AG04449 (cell line): ENCODE measurements at regions of chr11 and their contacts with region 1.

Region 1: GRCh38 chr11:134207538-134208239 is 16.1 kb downstream of the NCAPD3 start:
- DNase-seq: no peak
- H3K4me3 ChIP-seq: no peak overlapping the region
- CTCF ChIP-seq: peak; percentile 29

Region 2: DNA sequence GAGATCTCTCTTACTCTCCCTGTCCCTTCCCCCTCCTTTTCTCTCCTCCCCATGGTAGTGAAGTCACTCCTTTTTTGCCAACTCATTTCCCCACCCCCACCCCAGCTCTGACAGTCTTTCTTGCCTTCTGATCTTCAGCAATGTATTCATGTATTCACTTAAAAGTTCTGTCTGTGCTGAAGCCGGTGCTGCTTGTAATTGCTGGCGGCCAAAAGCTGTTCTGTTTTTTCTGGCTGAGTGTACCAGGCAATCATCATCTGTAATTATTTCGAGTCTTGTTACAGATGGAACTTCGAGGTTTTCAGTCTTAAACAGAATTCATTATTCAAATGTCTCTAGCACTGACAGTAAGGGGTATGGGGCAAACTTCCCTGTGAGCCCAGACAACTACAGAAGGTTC is 461.9 kb before region 1 on chr11:
- CTCF ChIA-PET with region 1: no interaction called
- POLR2A ChIA-PET with region 1: no interaction called
- DNase-seq: no peak
- H3K4me3 ChIP-seq: no peak overlapping the region
- CTCF ChIP-seq: no peak

Region 3: DNA sequence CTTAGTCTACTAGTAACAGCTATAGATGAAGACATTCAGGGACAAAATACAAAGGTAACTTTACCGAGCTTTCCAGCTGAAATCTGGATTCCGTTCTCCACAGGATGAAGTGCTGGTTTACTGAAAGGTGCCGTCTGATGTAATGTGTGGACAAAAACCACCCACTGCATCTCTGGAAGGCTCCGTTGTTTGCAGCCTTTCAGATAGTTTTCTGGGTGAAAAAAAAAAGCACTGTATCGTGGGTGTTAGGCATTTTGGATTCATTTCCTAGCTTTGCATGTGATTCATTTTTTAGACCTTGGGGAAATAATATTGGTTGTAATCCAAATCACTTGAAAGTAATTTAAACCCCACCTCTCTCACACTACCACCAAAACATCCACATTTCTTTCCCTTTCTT is 128.4 kb before region 1 on chr11:
- CTCF ChIA-PET with region 1: no interaction called
- POLR2A ChIA-PET with region 1: no interaction called
- DNase-seq: no peak
- H3K4me3 ChIP-seq: no peak overlapping the region
- CTCF ChIP-seq: no peak

Region 4: DNA sequence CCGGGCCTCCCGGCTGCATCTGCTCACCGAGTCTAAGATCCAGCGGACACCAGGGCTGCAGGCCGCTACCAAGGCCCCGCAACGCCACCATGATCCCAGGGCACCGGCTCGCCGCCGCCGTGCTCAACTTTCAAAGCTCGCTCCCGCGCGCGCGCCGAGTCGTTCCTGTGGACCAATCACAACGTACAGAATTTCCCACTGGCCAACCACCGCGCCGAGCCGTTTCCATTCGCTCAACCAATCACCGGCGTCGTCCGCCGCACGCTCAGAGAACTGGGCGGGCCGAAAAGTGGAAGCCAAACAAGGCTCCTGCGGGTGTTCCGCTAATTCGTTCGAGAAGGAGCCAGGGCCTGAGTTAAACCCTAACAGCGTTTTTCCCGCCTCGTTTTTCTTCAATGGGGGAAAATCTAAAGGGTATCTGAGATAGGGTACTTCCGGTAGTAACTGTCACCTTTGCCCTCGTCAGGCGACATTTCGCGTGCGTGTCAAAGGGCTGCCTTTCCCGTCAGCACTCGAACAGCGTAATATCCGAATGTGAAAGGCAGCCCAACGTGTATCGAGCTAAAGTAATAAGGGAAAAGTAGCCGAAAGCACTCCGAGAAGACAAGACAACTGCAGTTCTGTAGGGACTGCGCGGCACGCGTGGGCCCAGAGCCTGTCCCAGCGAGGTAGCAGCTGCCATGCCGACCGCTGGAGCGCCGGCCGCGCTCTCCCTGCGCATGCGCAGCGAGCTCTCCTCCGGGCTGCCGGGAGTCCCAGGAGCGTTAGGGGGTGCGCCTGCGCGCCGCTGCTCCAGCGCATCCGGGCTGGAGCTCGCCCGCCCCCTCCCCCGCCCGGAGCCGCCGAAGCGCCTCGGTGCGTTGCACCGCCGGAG is 16.4 kb after region 1 on chr11 and contains the starts of genes NCAPD3 and VPS26B:
- CTCF ChIA-PET with region 1: interaction called, 17 read pairs
- POLR2A ChIA-PET with region 1: no interaction called
- DNase-seq: peak; percentile 50
- H3K4me3 ChIP-seq: peak within 1 kb of the TSS; percentile 67
- CTCF ChIP-seq: no peak